ENCODE measurements at regions of chr10 and their contacts with region 1.

Region 1: GRCh38 chr10:78805176-78805575 is 263.6 kb upstream of the ZMIZ1 start:
- DNase-seq: peak; percentile 84
- H3K4me3 ChIP-seq: no peak overlapping the region
- H3K27ac ChIP-seq: peak overlapping the region; percentile 64 to 79
- H3K4me1 ChIP-seq: peaks cover 14% of the 10 kb centered on the region
- H3K27me3 ChIP-seq: no peaks in the 10 kb centered on the region
- CTCF ChIP-seq: no peak
- POLR2A ChIP-seq: no peak

Region 2: GRCh38 chr10:78746155-78746763 is 58.9 kb before region 1 on chr10:
- intact Hi-C with region 1: no loop called
- DNase-seq: no peak
- H3K4me3 ChIP-seq: no peak overlapping the region
- H3K27ac ChIP-seq: no peak overlapping the region
- H3K4me1 ChIP-seq: no peaks in the 10 kb centered on the region
- H3K27me3 ChIP-seq: no peaks in the 10 kb centered on the region
- CTCF ChIP-seq: no peak
- POLR2A ChIP-seq: no peak

Region 3: GRCh38 chr10:78756604-78757349 is 48.4 kb before region 1 on chr10:
- intact Hi-C with region 1: no loop called
- DNase-seq: peak; percentile 55
- H3K4me3 ChIP-seq: no peak overlapping the region
- H3K27ac ChIP-seq: no peak overlapping the region
- H3K4me1 ChIP-seq: no peaks in the 10 kb centered on the region
- H3K27me3 ChIP-seq: no peaks in the 10 kb centered on the region
- CTCF ChIP-seq: no peak
- POLR2A ChIP-seq: no peak

Region 4: GRCh38 chr10:78972947-78973900 is 168.0 kb after region 1 on chr10:
- intact Hi-C with region 1: loop called (anchors 2 kb)
- DNase-seq: peak; percentile 68
- H3K4me3 ChIP-seq: peak overlapping the region; percentile 40 to 48
- H3K27ac ChIP-seq: peak overlapping the region; percentile 95 to 96
- H3K4me1 ChIP-seq: peaks cover 6% of the 10 kb centered on the region
- H3K27me3 ChIP-seq: no peaks in the 10 kb centered on the region
- CTCF ChIP-seq: peak in 2 of 4 experiments; percentile 19 to 29
- POLR2A ChIP-seq: no peak

Region 5: DNA sequence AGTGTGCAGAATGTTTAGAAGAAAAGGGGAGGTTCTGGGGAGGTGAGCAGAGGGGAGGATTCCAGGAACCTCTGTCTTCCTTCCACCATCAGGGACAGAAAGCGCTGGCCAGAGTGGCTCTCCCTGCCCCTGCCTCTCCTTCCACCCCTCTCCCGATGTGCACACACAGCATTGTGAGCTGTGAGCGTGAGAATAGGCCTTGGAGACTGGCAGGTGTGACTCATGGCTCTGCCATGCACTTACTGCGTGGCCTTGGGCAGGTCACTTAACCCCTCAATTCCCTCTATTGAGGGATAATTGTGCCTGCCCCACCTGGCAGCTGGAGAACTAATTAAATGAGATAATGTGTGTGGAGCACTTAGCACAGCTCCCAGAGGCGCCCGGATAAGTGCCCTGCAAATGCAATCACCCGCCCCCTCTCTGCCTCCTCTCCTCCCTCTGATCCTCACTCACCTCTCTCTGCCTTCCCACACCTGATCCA is 379.0 kb after region 1 on chr10:
- intact Hi-C with region 1: loop called (anchors 10 kb)
- DNase-seq: no peak
- H3K4me3 ChIP-seq: no peak overlapping the region
- H3K27ac ChIP-seq: peak overlapping the region in 1 of 2 donors; percentile 2
- H3K4me1 ChIP-seq: peaks cover 6% of the 10 kb centered on the region
- H3K27me3 ChIP-seq: no peaks in the 10 kb centered on the region
- CTCF ChIP-seq: no peak
- POLR2A ChIP-seq: no peak

Measured in prostate gland (tissue), 2 donors.